CD4-positive, alpha-beta T cell (primary cell): ENCODE measurements at regions of chr12 and their contacts with region 1.

Region 1: DNA sequence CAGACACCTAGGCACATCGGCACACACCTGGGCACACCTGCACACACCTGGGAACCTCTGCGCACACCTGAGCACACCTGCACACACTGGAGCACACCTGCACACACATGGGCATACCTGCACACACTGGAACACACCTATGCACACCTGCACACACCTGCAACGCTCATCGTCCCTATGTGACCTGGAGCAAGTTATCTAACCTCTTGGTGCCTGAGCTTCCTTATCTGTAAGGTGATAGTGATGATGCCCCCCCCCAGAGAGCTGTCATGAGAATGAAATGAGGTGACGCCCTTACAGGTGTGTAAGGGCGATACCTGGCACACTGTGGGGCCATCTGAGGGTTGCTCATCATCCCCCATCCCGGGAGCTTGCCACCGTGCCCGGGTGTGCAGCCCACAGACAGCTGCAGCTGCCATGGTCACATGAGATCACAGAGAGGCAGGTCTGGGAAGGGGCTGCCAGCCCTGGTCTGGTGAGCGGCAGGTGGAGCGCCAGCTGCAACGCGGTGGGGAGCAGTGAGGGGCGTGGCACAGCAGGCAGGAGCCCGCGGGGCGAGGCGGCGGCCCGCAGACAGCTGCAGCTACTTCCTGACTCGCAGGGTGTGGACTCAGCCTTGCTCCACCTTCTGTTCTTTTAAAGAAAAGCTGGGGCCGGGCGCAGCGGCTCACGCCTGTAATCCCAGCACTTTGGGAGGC is 59.9 kb upstream of the FBRSL1 start:
- DNase-seq: peak; percentile 42 to 84 (median 68)
- ATAC-seq: peak; percentile 96
- H3K4me3 ChIP-seq: peak overlapping the region; percentile 33
- H3K4me3 Mint-ChIP-seq: peak overlapping the region; percentile 77
- H3K27ac ChIP-seq: no peak overlapping the region
- H3K27ac Mint-ChIP-seq: peak overlapping the region; percentile 70
- H3K4me1 ChIP-seq: peaks cover 51% of the 10 kb centered on the region
- H3K4me1 Mint-ChIP-seq: peaks cover 39% of the 10 kb centered on the region
- H3K27me3 ChIP-seq: no peaks in the 10 kb centered on the region
- H3K27me3 Mint-ChIP-seq: no peaks in the 10 kb centered on the region
- CTCF ChIP-seq: no peak

Region 2: DNA sequence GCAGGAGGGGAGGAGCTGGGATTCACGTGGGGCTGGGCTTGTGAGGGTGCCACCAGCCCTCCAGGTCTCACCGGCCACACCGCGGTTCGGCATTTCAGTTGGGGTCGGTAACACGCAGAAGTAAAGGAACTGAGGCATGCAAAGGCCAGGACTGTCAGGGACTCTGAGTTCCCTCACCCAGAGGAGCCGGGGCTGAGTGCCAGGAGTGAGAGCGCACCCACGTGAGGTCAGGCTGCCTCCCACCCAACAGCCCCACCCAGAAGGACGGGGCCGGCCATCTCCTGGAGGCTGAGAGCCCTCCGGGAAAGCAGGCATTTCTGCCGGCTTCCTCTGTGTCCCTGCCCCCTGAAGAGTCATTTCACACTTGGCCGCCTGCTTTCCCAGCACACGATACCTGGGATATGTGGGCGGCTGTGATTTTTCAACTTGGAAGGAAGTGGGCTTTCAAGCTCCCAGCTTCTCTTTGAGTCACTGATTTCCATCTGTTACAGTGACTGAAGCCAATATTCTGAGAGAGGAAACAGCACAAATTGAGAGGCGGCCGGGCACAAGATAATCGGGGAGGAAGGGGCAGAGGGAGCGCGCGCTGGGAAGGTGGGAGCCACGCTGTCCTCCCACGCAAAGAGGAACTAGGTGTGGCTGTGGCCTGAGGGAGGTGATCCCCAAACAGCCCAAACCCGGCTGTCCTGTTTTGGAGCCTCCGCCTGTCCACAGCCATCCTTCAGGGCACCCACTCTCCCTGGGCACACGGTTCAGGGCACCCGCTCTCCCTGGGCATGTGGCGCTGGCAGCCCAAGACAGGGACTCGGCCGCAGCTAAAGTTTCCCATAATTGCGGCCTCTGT is 119.7 kb before region 1 on chr12:
- CTCF ChIA-PET with region 1: no interaction called
- POLR2A ChIA-PET with region 1: no interaction called
- intact Hi-C with region 1: no loop called
- DNase-seq: no peak
- ATAC-seq: no peak
- H3K4me3 ChIP-seq: no peak overlapping the region
- H3K4me3 Mint-ChIP-seq: no peak overlapping the region
- H3K27ac ChIP-seq: no peak overlapping the region
- H3K27ac Mint-ChIP-seq: no peak overlapping the region
- H3K4me1 ChIP-seq: no peaks in the 10 kb centered on the region
- H3K4me1 Mint-ChIP-seq: no peaks in the 10 kb centered on the region
- H3K27me3 ChIP-seq: no peaks in the 10 kb centered on the region
- H3K27me3 Mint-ChIP-seq: peaks cover 9% of the 10 kb centered on the region
- CTCF ChIP-seq: no peak

Region 3: GRCh38 chr12:132445884-132446632 is 16.0 kb after region 1 on chr12:
- CTCF ChIA-PET with region 1: interaction called, 3 read pairs
- POLR2A ChIA-PET with region 1: interaction called, 14 read pairs
- intact Hi-C with region 1: no loop called
- DNase-seq: peak in 13 of 14 experiments; percentile 26 to 93 (median 58)
- ATAC-seq: peak; percentile 35
- H3K4me3 ChIP-seq: peak overlapping the region; percentile 51
- H3K4me3 Mint-ChIP-seq: peak overlapping the region; percentile 90
- H3K27ac ChIP-seq: peak overlapping the region; percentile 92 to 96
- H3K27ac Mint-ChIP-seq: peak overlapping the region; percentile 95
- H3K4me1 ChIP-seq: peaks cover 74% of the 10 kb centered on the region
- H3K4me1 Mint-ChIP-seq: peaks cover 69% of the 10 kb centered on the region
- H3K27me3 ChIP-seq: no peaks in the 10 kb centered on the region
- H3K27me3 Mint-ChIP-seq: no peaks in the 10 kb centered on the region
- CTCF ChIP-seq: no peak

Region 4: DNA sequence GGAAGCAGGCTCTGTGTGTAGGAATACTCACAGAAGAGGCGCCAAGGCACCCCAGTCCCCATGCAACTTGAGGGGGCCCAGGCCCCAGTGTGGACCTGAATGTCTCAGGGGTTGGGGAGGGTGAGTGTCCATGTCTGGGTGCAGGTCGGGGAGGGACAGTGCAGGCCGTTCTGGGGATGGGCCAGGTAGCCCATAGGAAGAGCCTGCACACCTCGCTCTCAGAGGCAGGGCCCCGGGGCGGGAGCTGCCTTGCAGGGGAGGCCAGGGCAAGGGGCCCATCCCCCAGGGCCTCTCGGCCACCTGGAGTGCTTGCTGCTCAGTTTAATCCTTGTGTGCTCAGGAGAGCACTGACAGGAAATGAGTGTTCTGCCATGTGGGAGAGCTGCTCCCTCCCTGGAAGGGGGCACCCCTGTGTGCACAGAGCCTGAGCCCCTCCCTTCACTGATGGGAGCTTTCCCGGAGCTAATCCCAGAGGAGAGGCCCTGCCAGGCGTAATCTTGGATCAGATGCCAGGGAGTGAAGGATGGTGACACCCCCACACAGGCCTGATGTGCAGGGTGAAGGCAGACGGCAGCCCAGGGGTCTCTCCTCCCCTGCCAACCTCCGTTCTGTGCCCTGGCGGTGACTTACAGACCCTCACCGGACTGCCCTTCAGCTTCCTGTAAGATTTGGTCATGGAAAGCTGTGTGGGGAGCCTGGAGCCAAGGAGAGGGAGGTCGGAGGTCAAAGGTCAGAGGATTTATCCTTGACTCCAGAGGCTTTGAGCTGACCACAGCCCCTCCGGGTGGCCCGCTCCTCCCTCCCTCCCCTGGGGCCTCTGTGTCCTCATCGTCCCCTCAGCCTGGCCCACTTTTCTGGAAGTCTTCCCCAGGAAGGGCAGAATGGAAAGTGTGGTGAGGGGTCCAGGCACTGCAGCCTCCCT is 35.4 kb after region 1 on chr12:
- CTCF ChIA-PET with region 1: no interaction called
- POLR2A ChIA-PET with region 1: interaction called, 3 read pairs
- intact Hi-C with region 1: loop called in 1 of 2 experiments (anchors 5 kb)
- DNase-seq: no peak
- ATAC-seq: no peak
- H3K4me3 ChIP-seq: no peak overlapping the region
- H3K4me3 Mint-ChIP-seq: no peak overlapping the region
- H3K27ac ChIP-seq: no peak overlapping the region
- H3K27ac Mint-ChIP-seq: no peak overlapping the region
- H3K4me1 ChIP-seq: peaks cover 26% of the 10 kb centered on the region
- H3K4me1 Mint-ChIP-seq: peaks cover 37% of the 10 kb centered on the region
- H3K27me3 ChIP-seq: no peaks in the 10 kb centered on the region
- H3K27me3 Mint-ChIP-seq: no peaks in the 10 kb centered on the region
- CTCF ChIP-seq: no peak

Region 5: GRCh38 chr12:132560614-132561426 is 130.7 kb after region 1 on chr12:
- CTCF ChIA-PET with region 1: no interaction called
- POLR2A ChIA-PET with region 1: no interaction called
- intact Hi-C with region 1: no loop called
- DNase-seq: peak; percentile 56 to 82 (median 66)
- ATAC-seq: peak; percentile 60
- H3K4me3 ChIP-seq: peak overlapping the region; percentile 41
- H3K4me3 Mint-ChIP-seq: peak overlapping the region; percentile 67
- H3K27ac ChIP-seq: no peak overlapping the region
- H3K27ac Mint-ChIP-seq: no peak overlapping the region
- H3K4me1 ChIP-seq: peaks cover 29% of the 10 kb centered on the region
- H3K4me1 Mint-ChIP-seq: peaks cover 22% of the 10 kb centered on the region
- H3K27me3 ChIP-seq: peaks cover 4 to 8% of the 10 kb centered on the region in 2 experiments
- H3K27me3 Mint-ChIP-seq: peaks cover 14% of the 10 kb centered on the region
- CTCF ChIP-seq: peak; percentile 77